ENCODE measurements at regions of chr4 and their contacts with region 1.

Region 1: DNA sequence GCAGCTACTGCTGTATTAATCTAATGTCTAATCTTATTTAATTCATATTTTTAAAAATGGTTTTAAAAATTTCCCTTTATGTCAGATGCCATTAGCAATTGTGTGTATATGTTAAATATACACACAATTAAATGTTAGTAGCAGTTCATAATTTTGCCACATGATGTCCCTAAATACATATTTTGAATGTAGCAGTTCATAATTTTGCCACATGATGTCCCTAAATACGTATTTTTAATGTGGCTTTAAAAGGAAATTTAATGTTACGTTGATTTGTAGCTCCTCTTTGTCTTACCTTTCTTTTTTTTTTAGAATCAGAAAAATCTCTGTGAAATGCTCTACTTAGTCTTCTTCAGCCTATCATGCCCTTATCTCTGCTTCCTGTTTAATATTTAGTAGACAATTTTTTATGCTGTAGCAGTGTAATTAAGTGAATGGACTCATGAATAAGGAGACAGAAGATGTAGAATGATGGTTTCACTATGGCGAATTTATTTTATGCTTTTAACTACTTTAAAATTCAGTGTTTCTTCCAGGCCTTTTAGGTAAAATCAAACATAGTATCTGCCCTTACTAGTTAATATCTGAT is 26.1 kb downstream of the RBM46 start:
- DNase-seq: peak; percentile 38
- H3K4me3 ChIP-seq: peak overlapping the region in 1 of 3 experiments; percentile 41
- H3K27ac ChIP-seq: no peak overlapping the region
- H3K4me1 ChIP-seq: no peaks in the 10 kb centered on the region
- H3K27me3 ChIP-seq: no peaks in the 10 kb centered on the region
- CTCF ChIP-seq: peak; percentile 76 to 77

Region 2: DNA sequence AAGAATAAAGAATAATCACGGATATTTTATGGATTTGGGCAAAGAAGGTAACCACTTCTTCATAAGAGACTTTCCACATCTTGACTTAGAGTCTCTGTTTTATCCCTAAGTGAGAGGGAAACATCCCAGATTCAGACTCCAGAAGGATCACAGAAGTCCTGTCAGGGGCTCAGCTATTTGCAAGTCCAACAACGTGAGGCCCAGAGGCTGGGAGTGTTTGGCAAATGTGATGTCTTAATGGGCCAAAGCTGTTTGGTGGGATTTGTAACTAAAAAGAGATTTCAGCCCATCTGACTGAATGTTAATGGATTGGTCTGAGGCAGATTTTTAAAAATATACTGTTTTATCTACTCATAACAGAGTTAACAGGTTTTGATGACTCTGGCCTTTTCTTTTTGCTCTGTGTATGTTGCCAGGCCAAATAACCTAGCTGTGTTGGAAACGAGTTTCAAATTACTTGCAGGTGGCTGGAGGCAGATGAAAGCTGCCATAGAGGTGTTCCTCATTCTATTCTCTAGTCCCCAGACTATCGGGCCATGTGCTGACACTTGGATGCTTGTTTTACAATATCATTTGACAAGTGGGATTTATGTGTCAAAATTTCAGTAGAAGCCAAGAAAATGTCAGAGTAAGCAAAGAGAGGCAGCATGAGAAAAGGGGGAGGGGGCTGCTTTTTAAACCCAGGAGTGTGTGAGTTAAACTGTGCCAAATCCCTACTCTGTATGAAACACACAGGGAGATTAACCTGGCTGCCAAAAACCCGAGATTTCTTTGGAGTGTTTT is 646.4 kb before region 1 on chr4:
- CTCF ChIA-PET with region 1: no interaction called
- dilution Hi-C with region 1: no loop called
- in situ Hi-C with region 1: no loop called
- intact Hi-C with region 1: no loop called
- DNase-seq: no peak
- H3K4me3 ChIP-seq: no peak overlapping the region
- H3K27ac ChIP-seq: no peak overlapping the region
- H3K4me1 ChIP-seq: peaks cover 14% of the 10 kb centered on the region
- H3K27me3 ChIP-seq: no peaks in the 10 kb centered on the region
- CTCF ChIP-seq: no peak

Region 3: DNA sequence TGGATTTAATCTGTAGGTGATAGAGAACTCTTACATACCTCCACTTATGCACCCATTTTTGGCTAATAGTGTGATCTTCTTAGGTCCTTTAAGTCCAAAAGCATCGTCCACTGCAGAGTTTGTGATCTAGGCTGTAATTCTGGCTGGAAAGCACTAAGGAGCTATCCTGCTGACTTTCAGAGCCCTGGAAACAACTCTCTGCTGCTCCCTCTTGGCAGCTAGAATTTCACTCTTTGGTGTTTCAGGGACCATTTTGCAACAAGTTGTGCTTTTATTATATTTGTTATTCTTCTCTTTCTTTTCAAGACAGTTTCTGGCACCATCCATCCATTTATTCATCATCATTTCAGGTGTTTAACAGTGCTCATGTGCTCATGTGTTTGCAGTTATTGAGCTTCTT is 104.0 kb after region 1 on chr4:
- CTCF ChIA-PET with region 1: interaction called, 13 read pairs
- dilution Hi-C with region 1: no loop called
- in situ Hi-C with region 1: no loop called
- intact Hi-C with region 1: loop called (anchors 1 kb)
- DNase-seq: no peak
- H3K4me3 ChIP-seq: no peak overlapping the region
- H3K27ac ChIP-seq: no peak overlapping the region
- H3K4me1 ChIP-seq: peaks cover 5% of the 10 kb centered on the region
- H3K27me3 ChIP-seq: peaks cover 2% of the 10 kb centered on the region
- CTCF ChIP-seq: peak; percentile 15 to 65

Region 4: GRCh38 chr4:154928640-154929257 is 121.6 kb after region 1 on chr4:
- CTCF ChIA-PET with region 1: no interaction called
- dilution Hi-C with region 1: no loop called
- in situ Hi-C with region 1: loop called (anchors 10 to 25 kb)
- intact Hi-C with region 1: loop called (anchors 1 kb)
- DNase-seq: peak; percentile 23
- H3K4me3 ChIP-seq: no peak overlapping the region
- H3K27ac ChIP-seq: no peak overlapping the region
- H3K4me1 ChIP-seq: no peaks in the 10 kb centered on the region
- H3K27me3 ChIP-seq: no peaks in the 10 kb centered on the region
- CTCF ChIP-seq: peak; percentile 41 to 76

Region 5: DNA sequence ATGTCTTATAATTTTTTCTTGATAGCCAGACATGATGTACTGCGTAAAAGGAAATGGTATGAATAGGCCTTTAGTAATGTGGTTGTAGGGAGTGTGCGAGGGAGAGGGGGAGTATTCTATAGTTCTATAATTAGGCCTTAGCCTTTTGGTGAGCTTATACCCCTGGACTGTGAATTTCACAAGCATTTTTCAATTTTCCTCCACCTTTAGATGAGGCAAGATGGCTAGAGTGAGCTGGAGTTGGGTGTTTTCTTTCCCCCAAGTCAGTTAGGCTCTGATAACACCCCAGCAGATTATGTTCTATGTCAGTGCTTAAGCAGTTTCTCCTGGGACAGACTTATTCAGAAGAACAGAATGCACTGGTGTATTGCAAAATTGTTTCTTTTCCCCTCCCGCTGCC is 191.1 kb after region 1 on chr4:
- CTCF ChIA-PET with region 1: no interaction called
- dilution Hi-C with region 1: no loop called
- in situ Hi-C with region 1: no loop called
- intact Hi-C with region 1: no loop called
- DNase-seq: no peak
- H3K4me3 ChIP-seq: no peak overlapping the region
- H3K27ac ChIP-seq: no peak overlapping the region
- H3K4me1 ChIP-seq: no peaks in the 10 kb centered on the region
- H3K27me3 ChIP-seq: no peaks in the 10 kb centered on the region
- CTCF ChIP-seq: no peak

Region 6: DNA sequence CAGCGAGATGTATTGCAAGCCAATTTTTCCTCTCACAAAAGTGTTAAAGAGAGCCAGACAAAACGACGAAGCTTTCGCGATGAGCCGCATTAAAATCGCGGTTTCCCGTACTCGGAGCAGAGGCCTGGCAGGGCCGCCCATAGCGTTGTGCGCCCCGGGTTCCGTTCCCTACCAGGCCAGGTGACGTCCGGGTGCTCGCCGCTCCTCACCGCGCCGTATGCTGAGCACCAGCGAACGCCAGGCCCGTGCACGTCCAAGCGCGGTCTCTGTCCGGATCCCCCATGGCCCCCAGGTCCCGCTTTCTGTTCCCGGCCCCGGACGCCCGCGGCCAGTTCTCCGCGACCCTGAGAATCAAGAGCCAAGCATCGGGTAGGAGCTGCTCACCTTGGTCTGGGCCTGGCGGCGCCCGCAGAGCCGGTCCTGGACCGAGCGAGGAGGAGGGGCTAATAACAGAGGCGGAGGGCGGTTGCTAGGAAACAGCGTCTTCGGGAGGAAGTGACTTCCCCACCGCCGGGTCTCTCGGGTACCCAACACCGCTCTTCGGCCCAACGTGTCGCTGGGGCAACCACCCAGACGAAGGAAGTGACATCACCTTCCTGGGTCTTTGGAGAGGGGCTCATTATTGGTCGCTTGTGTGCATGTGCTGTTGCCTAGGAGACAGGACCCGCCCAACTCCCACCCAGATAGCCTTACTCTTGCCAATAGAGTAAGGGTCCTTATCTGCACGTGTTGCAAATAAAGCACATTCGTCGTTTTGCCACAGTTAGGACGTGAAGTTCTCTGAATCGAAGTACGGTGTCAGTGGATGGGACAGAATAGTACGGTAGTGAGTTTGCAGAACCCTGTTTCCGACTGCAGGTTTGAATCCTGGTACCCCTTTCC is 569.5 kb after region 1 on chr4 and contains the start of gene MAP9:
- CTCF ChIA-PET with region 1: no interaction called
- dilution Hi-C with region 1: no loop called
- in situ Hi-C with region 1: loop called in 1 of 2 experiments (anchors 10 kb)
- intact Hi-C with region 1: loop called (anchors 5 kb)
- DNase-seq: peak; percentile 90
- H3K4me3 ChIP-seq: peak within 1 kb of the TSS; percentile 76 to 97 (median 87)
- H3K27ac ChIP-seq: peak within 1 kb of the TSS; percentile 73
- H3K4me1 ChIP-seq: peaks cover 5% of the 10 kb centered on the region
- H3K27me3 ChIP-seq: no peaks in the 10 kb centered on the region
- CTCF ChIP-seq: no peak
- total RNA-seq, gene MAP9: 20.0 to 21.8 TPM